PC-9 (cell line): ENCODE measurements at regions of chr10 and their contacts with region 1.

Region 1: DNA sequence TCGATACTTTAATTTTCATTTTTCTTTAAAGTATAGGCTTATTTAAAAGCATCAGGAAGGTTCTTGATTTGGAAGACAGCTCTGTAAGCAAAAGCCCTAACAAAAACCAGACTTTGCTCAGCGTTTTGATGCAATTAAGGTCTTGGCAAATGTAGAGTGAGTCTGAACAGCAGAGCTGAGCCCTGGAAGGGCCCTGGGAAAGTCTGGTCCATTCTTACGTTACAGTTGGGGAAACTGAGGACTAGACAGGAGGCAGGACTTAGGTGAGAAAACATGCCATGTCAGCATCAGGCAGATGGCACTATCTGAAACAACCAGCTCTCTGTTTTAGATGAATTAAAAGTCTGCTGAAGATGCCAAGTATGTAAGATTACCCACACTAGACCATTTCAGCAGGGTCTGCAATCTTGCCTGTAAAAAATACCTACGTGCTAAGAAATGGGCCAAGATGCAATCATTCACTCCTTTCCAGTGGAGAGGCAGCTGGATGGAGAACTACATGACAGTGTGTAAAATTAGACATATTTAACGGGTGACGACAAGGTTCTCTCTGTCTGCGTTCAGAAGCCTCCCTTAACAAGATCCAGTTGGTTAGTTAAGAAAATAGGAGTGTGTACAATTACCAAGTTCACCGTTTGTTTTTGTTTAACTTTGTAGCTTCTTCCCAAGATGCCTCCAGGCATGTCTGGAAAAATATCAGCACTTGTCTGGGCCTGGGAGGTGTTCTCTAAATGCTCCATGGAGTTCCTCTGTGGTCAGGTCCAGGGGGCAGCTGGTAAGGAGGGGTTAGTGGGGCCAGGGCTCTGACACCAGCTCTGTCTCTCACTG is 502.3 kb upstream of the ZMIZ1 start:
- DNase-seq: no peak
- H3K4me3 ChIP-seq: no peak overlapping the region
- H3K27ac ChIP-seq: no peak overlapping the region
- H3K4me1 ChIP-seq: no peaks in the 10 kb centered on the region
- H3K27me3 ChIP-seq: peaks cover 40% of the 10 kb centered on the region
- CTCF ChIP-seq: no peak

Region 2: GRCh38 chr10:78451592-78451991 is 114.9 kb before region 1 on chr10:
- CTCF ChIA-PET with region 1: interaction called, 10 read pairs
- POLR2A ChIA-PET with region 1: no interaction called
- intact Hi-C with region 1: no loop called
- DNase-seq: no peak
- H3K4me3 ChIP-seq: no peak overlapping the region
- H3K27ac ChIP-seq: no peak overlapping the region
- H3K4me1 ChIP-seq: no peaks in the 10 kb centered on the region
- H3K27me3 ChIP-seq: peaks cover 22% of the 10 kb centered on the region
- CTCF ChIP-seq: no peak